ENCODE measurements at regions of chr1 and their contacts with region 1.

Region 1: DNA sequence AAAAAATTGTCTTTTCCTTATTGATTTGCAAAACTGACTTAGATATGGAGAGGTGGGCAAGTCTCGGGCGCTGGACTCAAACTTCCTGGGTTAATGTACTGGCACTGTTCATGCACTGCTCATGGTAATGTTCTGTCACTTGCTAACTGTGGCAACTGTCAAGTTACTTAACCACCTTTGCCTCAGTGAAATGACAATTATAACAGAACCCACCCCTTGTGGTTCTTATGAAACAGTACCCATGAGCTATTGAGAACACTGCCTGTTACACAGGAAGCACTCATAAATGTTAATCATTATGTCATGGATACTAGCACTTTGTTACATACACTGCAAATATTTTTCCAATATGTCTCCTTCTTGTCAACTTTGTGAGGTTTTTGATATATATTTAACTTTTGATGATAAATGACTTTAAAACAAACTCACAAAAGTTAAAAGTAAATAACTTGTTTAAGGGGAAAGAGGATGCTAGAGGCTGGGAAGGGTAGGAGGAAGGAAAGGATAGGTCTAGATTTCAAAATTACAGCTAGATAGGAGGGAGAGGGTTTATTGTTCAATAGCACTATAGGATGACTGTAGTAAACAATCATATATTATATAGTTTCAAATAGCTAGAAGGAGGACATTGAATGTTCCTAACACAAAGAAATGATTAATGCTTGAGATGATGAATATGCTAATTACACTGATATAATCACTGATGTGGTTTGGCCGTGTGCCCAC is 342.5 kb downstream of the ADGRL2 start:
- DNase-seq: no peak
- ATAC-seq: peak; percentile 82
- H3K4me3 ChIP-seq: no peak overlapping the region
- H3K27ac ChIP-seq: no peak overlapping the region
- H3K4me1 ChIP-seq: no peaks in the 10 kb centered on the region
- H3K27me3 ChIP-seq: no peaks in the 10 kb centered on the region
- CTCF ChIP-seq: no peak
- EP300 ChIP-seq: no peak
- POLR2A ChIP-seq: no peak
- RAD21 ChIP-seq: no peak

Region 2: DNA sequence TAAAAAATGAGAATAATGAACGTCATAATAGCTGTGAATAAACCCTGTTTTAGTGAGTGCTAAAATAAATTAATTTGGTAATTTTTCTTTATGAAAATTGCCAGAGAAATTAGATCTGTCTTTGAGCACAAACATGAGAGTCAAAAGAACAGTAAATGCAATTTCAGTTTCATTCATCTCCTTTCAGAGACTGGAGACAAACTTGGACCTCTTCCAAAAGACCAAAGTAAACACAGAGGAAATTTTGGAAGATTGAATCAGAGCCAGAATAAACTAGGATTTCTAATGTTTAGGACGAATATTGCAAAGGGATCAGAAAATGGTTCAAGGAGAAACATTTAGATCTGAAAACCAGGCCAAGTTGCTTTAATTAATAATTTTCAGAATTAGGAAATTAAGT is 32.4 kb before region 1 on chr1:
- CTCF ChIA-PET with region 1: interaction called, 3 read pairs
- POLR2A ChIA-PET with region 1: no interaction called
- RAD21 ChIA-PET with region 1: interaction called, 4 read pairs
- SMC1A ChIA-PET with region 1: interaction called, 13 read pairs
- in situ Hi-C with region 1: no loop called
- intact Hi-C with region 1: no loop called
- DNase-seq: no peak
- ATAC-seq: no peak
- H3K4me3 ChIP-seq: no peak overlapping the region
- H3K27ac ChIP-seq: no peak overlapping the region
- H3K4me1 ChIP-seq: no peaks in the 10 kb centered on the region
- H3K27me3 ChIP-seq: no peaks in the 10 kb centered on the region
- CTCF ChIP-seq: no peak
- EP300 ChIP-seq: no peak
- POLR2A ChIP-seq: no peak
- RAD21 ChIP-seq: no peak

Region 3: GRCh38 chr1:82125119-82125518 is 18.2 kb before region 1 on chr1:
- CTCF ChIA-PET with region 1: interaction called, 6 read pairs
- POLR2A ChIA-PET with region 1: interaction called, 9 read pairs
- RAD21 ChIA-PET with region 1: interaction called, 6 read pairs
- SMC1A ChIA-PET with region 1: interaction called, 11 read pairs
- in situ Hi-C with region 1: no loop called
- intact Hi-C with region 1: no loop called
- DNase-seq: no peak
- ATAC-seq: no peak
- H3K4me3 ChIP-seq: no peak overlapping the region
- H3K27ac ChIP-seq: no peak overlapping the region
- H3K4me1 ChIP-seq: no peaks in the 10 kb centered on the region
- H3K27me3 ChIP-seq: no peaks in the 10 kb centered on the region
- CTCF ChIP-seq: no peak
- EP300 ChIP-seq: no peak
- POLR2A ChIP-seq: no peak
- RAD21 ChIP-seq: no peak

Measured in GM12878 (cell line).